ENCODE measurements at regions of chr7 and their contacts with region 1.

Region 1: GRCh38 chr7:149662591-149663095 is 110.7 kb downstream of the ZNF467 start:
- H3K4me3 ChIP-seq: no peak overlapping the region
- H3K27ac ChIP-seq: no peak overlapping the region
- H3K4me1 ChIP-seq: no peaks in the 10 kb centered on the region
- CTCF ChIP-seq: peak; percentile 69

Region 2: GRCh38 chr7:149644778-149645177 is 17.9 kb before region 1 on chr7:
- CTCF ChIA-PET with region 1: interaction called, 25 read pairs
- POLR2A ChIA-PET with region 1: no interaction called
- H3K4me3 ChIP-seq: no peak overlapping the region
- H3K27ac ChIP-seq: no peak overlapping the region
- H3K4me1 ChIP-seq: no peaks in the 10 kb centered on the region
- CTCF ChIP-seq: no peak

Region 3: GRCh38 chr7:149692557-149692982 is 29.9 kb after region 1 on chr7:
- CTCF ChIA-PET with region 1: interaction called, 10 read pairs
- POLR2A ChIA-PET with region 1: no interaction called
- H3K4me3 ChIP-seq: no peak overlapping the region
- H3K27ac ChIP-seq: no peak overlapping the region
- H3K4me1 ChIP-seq: no peaks in the 10 kb centered on the region
- CTCF ChIP-seq: no peak

Region 4: DNA sequence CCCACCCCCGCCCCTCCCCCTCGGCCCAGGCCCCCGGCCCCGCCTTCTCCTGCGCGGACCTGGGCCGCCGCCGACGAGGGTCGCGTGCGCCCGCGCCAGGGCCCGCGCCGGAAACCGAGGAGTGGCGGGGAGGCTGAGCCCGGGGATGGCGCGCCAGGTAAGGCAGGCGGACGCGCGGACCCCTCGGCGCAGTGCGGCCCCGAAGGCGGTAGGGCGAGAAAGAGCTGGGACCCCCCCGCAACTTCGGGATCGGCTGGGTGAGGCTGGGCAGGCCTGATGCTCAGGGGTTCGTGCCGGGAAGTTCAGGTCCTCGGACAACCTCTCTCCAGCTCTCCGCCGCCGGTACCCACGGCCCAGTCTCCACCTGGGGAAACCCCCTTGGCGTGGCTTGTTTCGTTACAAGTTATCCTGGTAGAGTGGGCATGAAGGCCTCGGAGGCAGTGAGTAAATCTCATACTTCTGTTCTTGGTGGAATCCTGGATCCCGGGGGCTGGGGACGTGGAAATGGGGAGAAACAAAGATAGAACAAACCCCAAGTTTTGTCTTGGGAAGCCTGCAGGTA is 52.3 kb after region 1 on chr7:
- CTCF ChIA-PET with region 1: interaction called, 11 read pairs
- POLR2A ChIA-PET with region 1: no interaction called
- H3K4me3 ChIP-seq: peak overlapping the region; percentile 84
- H3K27ac ChIP-seq: peak overlapping the region; percentile 37; the same call in 1 of the 2 replicates
- H3K4me1 ChIP-seq: no peaks in the 10 kb centered on the region
- CTCF ChIP-seq: no peak

Region 5: GRCh38 chr7:149742075-149742701 is 79.5 kb after region 1 on chr7:
- CTCF ChIA-PET with region 1: interaction called, 104 read pairs
- POLR2A ChIA-PET with region 1: interaction called, 5 read pairs
- H3K4me3 ChIP-seq: peak overlapping the region; percentile 46
- H3K27ac ChIP-seq: no peak overlapping the region
- H3K4me1 ChIP-seq: no peaks in the 10 kb centered on the region
- CTCF ChIP-seq: peak; percentile 75; the same call in 1 of the 2 replicates

Region 6: GRCh38 chr7:149790146-149790548 is 127.5 kb after region 1 on chr7:
- CTCF ChIA-PET with region 1: interaction called, 20 read pairs
- POLR2A ChIA-PET with region 1: no interaction called
- H3K4me3 ChIP-seq: no peak overlapping the region
- H3K27ac ChIP-seq: no peak overlapping the region
- H3K4me1 ChIP-seq: no peaks in the 10 kb centered on the region
- CTCF ChIP-seq: no peak